Mammary epithelial cell (primary cell): ENCODE measurements at regions of chr14 and their contacts with region 1.

Region 1: DNA sequence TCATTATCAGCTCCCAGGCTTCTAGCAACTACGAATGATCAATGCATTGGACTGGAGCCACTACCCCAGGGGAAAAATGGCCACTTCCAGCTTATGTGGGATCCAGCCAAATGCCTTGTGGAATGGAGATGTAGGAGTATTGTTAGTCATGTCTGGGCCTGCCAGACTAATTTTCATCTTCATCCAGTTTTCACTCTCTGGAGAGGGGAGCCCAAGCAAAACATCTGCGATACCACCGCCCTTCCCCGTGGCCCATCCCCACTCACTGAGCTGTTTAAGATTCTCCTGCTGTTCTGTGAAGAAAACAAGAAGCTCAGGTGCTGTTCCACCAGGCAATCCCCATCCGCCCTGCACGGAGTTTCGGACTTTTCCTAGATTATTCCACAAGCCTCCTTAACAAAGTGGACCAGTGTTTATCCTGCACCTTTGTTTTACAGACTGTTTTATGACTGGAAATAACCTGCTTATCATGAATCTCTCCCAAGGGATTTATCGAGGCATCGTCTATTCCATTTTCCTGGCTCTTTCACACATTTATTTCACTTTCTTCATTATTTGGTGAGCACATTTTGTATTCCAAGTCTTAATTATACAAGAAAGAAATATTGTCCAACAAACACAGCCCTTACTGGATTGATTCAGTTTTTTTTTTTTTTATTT is 35.5 kb upstream of the MAX start:
- DNase-seq: peak; percentile 48
- H3K4me3 ChIP-seq: no peak overlapping the region
- H3K27ac ChIP-seq: peak overlapping the region; percentile 32
- H3K4me1 ChIP-seq: peaks cover 6% of the 10 kb centered on the region
- H3K27me3 ChIP-seq: no peaks in the 10 kb centered on the region
- CTCF ChIP-seq: no peak

Region 2: GRCh38 chr14:65042731-65043372 is 94.9 kb before region 1 on chr14:
- CTCF ChIA-PET with region 1: no interaction called
- dilution Hi-C with region 1: no loop called
- in situ Hi-C with region 1: no loop called
- intact Hi-C with region 1: no loop called
- DNase-seq: no peak
- H3K4me3 ChIP-seq: no peak overlapping the region
- H3K27ac ChIP-seq: no peak overlapping the region
- H3K4me1 ChIP-seq: peaks cover 10% of the 10 kb centered on the region
- H3K27me3 ChIP-seq: no peaks in the 10 kb centered on the region
- CTCF ChIP-seq: no peak

Region 3: GRCh38 chr14:65156568-65157366 is 19.0 kb after region 1 on chr14:
- CTCF ChIA-PET with region 1: no interaction called
- dilution Hi-C with region 1: no loop called
- in situ Hi-C with region 1: no loop called
- intact Hi-C with region 1: loop called (anchors 2 kb)
- DNase-seq: peak; percentile 38
- H3K4me3 ChIP-seq: no peak overlapping the region
- H3K27ac ChIP-seq: no peak overlapping the region
- H3K4me1 ChIP-seq: peaks cover 9% of the 10 kb centered on the region
- H3K27me3 ChIP-seq: no peaks in the 10 kb centered on the region
- CTCF ChIP-seq: no peak

Region 4: DNA sequence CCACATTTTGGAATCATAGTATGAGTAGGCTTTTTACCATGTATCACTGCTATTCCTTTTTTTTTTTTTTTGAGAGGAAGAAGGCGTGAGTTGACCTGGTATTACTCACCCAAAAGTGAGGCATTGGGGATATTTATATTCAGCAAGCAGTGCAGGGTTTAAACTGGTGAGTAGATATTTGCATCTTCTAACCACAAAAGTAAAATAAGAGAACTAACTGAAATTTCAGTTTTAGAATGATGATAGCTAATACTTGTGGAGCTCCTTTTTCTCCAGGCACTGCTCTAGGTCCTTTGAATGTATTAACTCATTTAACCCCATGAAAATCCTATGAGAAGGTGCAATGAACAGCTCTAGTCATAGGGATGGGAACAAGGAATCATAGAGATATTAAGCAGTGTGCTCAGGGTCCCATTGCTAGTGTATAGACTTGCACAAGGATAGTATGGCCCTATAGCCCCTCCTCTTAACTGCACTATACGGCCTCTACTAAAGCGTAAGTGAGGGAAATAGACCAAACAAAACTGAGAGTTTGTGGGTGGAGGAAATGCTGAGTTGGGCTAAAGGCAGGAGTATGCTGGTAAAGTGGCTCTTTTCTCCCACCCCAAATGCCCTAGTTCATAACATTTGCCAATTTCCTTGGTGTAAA is 68.8 kb after region 1 on chr14:
- CTCF ChIA-PET with region 1: no interaction called
- dilution Hi-C with region 1: no loop called
- in situ Hi-C with region 1: no loop called
- intact Hi-C with region 1: no loop called
- DNase-seq: peak; percentile 80
- H3K4me3 ChIP-seq: no peak overlapping the region
- H3K27ac ChIP-seq: no peak overlapping the region
- H3K4me1 ChIP-seq: peaks cover 25% of the 10 kb centered on the region
- H3K27me3 ChIP-seq: no peaks in the 10 kb centered on the region
- CTCF ChIP-seq: no peak